ENCODE measurements at regions of chr19 and their contacts with region 1.

Region 1: GRCh38 chr19:14395710-14396336 is 14.6 kb downstream of the ADGRE5 start:
- DNase-seq: peak in 1 of 4 experiments; percentile 5
- ATAC-seq: peak; percentile 28
- H3K4me3 ChIP-seq: no peak overlapping the region
- H3K27ac ChIP-seq: no peak overlapping the region
- H3K4me1 ChIP-seq: peaks cover 0 to 6% of the 10 kb centered on the region in 2 experiments; a peak in 3 of 5 replicates
- H3K27me3 ChIP-seq: no peaks in the 10 kb centered on the region
- CTCF ChIP-seq: no peak
- EP300 ChIP-seq: no peak
- POLR2A ChIP-seq: 0 out of 2 replicates have a peak, but pooled peaks have one; percentile 33
- RAD21 ChIP-seq: no peak

Region 2: DNA sequence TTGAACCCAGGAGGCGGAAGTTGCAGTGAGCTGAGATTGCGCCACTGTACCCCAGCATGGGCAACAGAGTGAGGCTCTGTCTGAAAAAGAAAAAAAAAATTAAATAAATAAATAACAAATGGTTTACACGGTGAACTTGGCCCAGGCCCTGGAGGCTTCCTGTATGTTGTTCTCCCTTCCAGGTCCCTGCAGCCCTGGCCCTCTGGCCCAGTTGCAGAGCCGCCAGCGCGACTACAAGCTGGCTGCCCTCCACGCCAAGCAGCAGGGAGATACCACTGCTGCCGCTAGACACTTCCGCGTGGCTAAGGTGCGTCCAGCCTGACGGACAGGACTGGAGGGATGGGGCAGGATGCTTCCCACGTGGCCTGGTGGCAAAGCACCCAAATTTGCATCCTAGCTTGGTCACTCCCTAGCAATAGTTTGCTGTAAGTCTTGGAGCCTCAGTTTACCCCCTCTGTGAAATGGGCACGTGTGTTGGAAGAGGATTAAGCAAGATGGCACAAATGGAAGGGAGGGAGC is 477.9 kb before region 1 on chr19:
- CTCF ChIA-PET with region 1: no interaction called
- POLR2A ChIA-PET with region 1: no interaction called
- in situ Hi-C with region 1: no loop called
- intact Hi-C with region 1: no loop called
- DNase-seq: peak in 1 of 4 experiments; percentile 11
- ATAC-seq: no peak
- H3K4me3 ChIP-seq: no peak overlapping the region
- H3K27ac ChIP-seq: no peak overlapping the region
- H3K4me1 ChIP-seq: peaks cover 0 to 19% of the 10 kb centered on the region in 2 experiments; a peak in 1 of 5 replicates
- H3K27me3 ChIP-seq: no peaks in the 10 kb centered on the region; a peak in 1 of 5 replicates
- CTCF ChIP-seq: no peak
- EP300 ChIP-seq: no peak
- POLR2A ChIP-seq: no peak
- RAD21 ChIP-seq: no peak

Region 3: GRCh38 chr19:14310055-14310454 is 85.8 kb before region 1 on chr19:
- CTCF ChIA-PET with region 1: no interaction called
- POLR2A ChIA-PET with region 1: no interaction called
- in situ Hi-C with region 1: no loop called
- intact Hi-C with region 1: no loop called
- DNase-seq: no peak
- ATAC-seq: no peak
- H3K4me3 ChIP-seq: no peak overlapping the region
- H3K27ac ChIP-seq: no peak overlapping the region
- H3K4me1 ChIP-seq: no peaks in the 10 kb centered on the region; a peak in 1 of 5 replicates
- H3K27me3 ChIP-seq: peaks cover 17 to 31% of the 10 kb centered on the region in 2 experiments; a peak in 4 of 5 replicates
- CTCF ChIP-seq: no peak
- EP300 ChIP-seq: no peak
- POLR2A ChIP-seq: no peak
- RAD21 ChIP-seq: no peak

Region 4: DNA sequence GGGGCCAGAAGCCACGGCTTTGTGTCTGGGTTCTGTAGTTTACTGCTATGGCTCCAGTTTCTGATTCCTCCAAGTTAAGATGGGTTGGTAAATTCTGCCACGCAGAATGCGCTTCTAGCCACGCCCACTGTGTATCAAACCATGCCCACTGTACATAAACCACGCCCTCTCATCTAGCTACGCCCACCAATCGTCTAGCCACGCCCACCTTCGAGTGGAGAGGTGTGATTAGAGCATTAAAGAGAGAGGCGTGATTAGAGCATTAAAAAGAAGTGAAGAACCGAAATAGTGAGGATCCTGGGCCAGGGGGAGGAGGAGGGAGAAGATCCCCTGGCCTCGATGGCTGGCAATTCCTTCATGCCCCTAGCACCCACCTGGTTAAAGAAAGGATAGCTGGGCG is 58.3 kb before region 1 on chr19:
- CTCF ChIA-PET with region 1: no interaction called
- POLR2A ChIA-PET with region 1: no interaction called
- in situ Hi-C with region 1: no loop called
- intact Hi-C with region 1: no loop called
- DNase-seq: peak; percentile 79 to 83 (median 82)
- ATAC-seq: peak; percentile 99
- H3K4me3 ChIP-seq: no peak overlapping the region
- H3K27ac ChIP-seq: no peak overlapping the region
- H3K4me1 ChIP-seq: peaks cover 0 to 6% of the 10 kb centered on the region in 2 experiments; a peak in 2 of 5 replicates
- H3K27me3 ChIP-seq: peaks cover 0 to 12% of the 10 kb centered on the region in 2 experiments; a peak in 2 of 5 replicates
- CTCF ChIP-seq: no peak
- EP300 ChIP-seq: no peak
- POLR2A ChIP-seq: no peak
- RAD21 ChIP-seq: no peak

Region 5: GRCh38 chr19:14769201-14769600 is 373.4 kb after region 1 on chr19:
- CTCF ChIA-PET with region 1: no interaction called
- POLR2A ChIA-PET with region 1: interaction called, 7 read pairs
- in situ Hi-C with region 1: loop called (anchors 5 kb)
- intact Hi-C with region 1: no loop called
- DNase-seq: no peak
- ATAC-seq: no peak
- H3K4me3 ChIP-seq: no peak overlapping the region
- H3K27ac ChIP-seq: no peak overlapping the region
- H3K4me1 ChIP-seq: no peaks in the 10 kb centered on the region
- H3K27me3 ChIP-seq: no peaks in the 10 kb centered on the region
- CTCF ChIP-seq: no peak
- EP300 ChIP-seq: no peak
- POLR2A ChIP-seq: no peak
- RAD21 ChIP-seq: no peak

Measured in K562 (cell line).